ENCODE measurements at regions of chr14 and their contacts with region 1.

Region 1: GRCh38 chr14:61475316-61475715 is 153.9 kb downstream of the PRKCH start:
- DNase-seq: peak in 3 of 5 donors; percentile 38 to 52 (median 40)
- H3K4me3 ChIP-seq: no peak overlapping the region
- H3K4me3 Mint-ChIP-seq: peak overlapping the region in 6 of 8 donors; percentile 25 to 81 (median 48)
- H3K27ac ChIP-seq: peak overlapping the region; percentile 87
- H3K27ac Mint-ChIP-seq: peak overlapping the region; percentile 87 to 100 (median 93)
- H3K4me1 ChIP-seq: peaks cover 98% of the 10 kb centered on the region
- H3K4me1 Mint-ChIP-seq: peaks cover 76 to 97% (median 92%) of the 10 kb centered on the region in 4 donors
- H3K27me3 ChIP-seq: no peaks in the 10 kb centered on the region
- H3K27me3 Mint-ChIP-seq: no peaks in the 10 kb centered on the region

Region 2: DNA sequence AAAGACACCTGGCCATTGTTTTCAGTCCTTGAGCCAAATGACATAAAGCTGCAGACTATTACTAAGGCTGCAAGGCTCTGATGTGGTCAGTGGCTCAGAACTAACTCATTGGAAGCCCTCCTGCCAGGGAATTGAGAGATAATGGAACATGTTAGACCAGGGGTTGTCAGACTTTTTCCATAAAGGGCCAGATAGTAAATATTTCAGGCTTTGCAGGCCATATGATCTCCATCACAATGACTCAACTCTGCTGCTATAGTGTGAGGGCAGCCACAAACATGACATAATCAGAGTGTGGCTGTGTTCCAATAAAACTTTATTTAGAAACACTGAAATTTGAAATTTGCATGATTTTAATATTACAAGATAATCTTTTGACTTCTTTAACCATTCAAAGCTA is 334.4 kb before region 1 on chr14:
- CTCF ChIA-PET with region 1: no interaction called
- POLR2A ChIA-PET with region 1: no interaction called
- intact Hi-C with region 1: no loop called
- DNase-seq: no peak
- H3K4me3 ChIP-seq: no peak overlapping the region
- H3K4me3 Mint-ChIP-seq: no peak overlapping the region
- H3K27ac ChIP-seq: no peak overlapping the region
- H3K27ac Mint-ChIP-seq: no peak overlapping the region
- H3K4me1 ChIP-seq: no peaks in the 10 kb centered on the region
- H3K4me1 Mint-ChIP-seq: no peaks in the 10 kb centered on the region
- H3K27me3 ChIP-seq: no peaks in the 10 kb centered on the region
- H3K27me3 Mint-ChIP-seq: peaks cover 11 to 18% of the 10 kb centered on the region in 2 donors

Region 3: GRCh38 chr14:61321385-61322010 is 153.8 kb before region 1 on chr14 and contains the start of gene PRKCH:
- CTCF ChIA-PET with region 1: no interaction called
- POLR2A ChIA-PET with region 1: interaction called, 11 read pairs
- intact Hi-C with region 1: no loop called
- DNase-seq: peak; percentile 84 to 91 (median 85)
- H3K4me3 ChIP-seq: peak within 1 kb of the TSS; percentile 85 to 95
- H3K4me3 Mint-ChIP-seq: peak within 1 kb of the TSS; percentile 98 to 100 (median 99)
- H3K27ac ChIP-seq: peak within 1 kb of the TSS; percentile 89
- H3K27ac Mint-ChIP-seq: peak within 1 kb of the TSS in 6 of 7 donors; percentile 94 to 99 (median 97)
- H3K4me1 ChIP-seq: peaks cover 26% of the 10 kb centered on the region
- H3K4me1 Mint-ChIP-seq: peaks cover 17 to 40% (median 22%) of the 10 kb centered on the region in 4 donors
- H3K27me3 ChIP-seq: no peaks in the 10 kb centered on the region
- H3K27me3 Mint-ChIP-seq: no peaks in the 10 kb centered on the region
- total RNA-seq, gene PRKCH: 247 to 284 TPM

Region 4: DNA sequence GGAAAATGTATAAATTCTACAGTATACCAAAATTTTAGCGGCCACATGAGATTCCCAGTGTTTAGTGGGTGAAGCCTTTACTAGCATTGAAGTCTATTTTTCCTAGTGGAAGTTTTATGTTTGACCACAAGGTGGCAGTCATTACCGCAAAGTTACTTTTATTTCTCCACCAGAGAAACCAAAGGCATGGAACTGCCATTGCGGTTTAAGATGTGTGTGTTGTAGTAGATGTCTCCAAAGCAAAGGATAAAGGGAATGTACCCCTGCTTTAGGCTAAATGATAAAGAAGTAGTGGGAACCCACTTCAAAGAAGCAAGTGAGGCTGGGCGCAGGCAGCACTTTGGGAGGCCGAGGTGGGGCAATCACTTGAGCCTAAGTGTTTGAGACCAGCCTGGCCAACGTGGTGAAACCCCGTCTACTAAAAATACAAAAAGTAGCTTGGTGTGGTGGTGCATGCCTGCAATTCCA is 13.5 kb before region 1 on chr14:
- CTCF ChIA-PET with region 1: interaction called, 37 read pairs
- POLR2A ChIA-PET with region 1: interaction called, 16 read pairs
- intact Hi-C with region 1: loop called (anchors 1 kb)
- DNase-seq: peak; percentile 58 to 71 (median 69)
- H3K4me3 ChIP-seq: no peak overlapping the region
- H3K4me3 Mint-ChIP-seq: peak overlapping the region in 5 of 8 donors; percentile 21 to 51 (median 47)
- H3K27ac ChIP-seq: peak overlapping the region; percentile 22
- H3K27ac Mint-ChIP-seq: peak overlapping the region; percentile 88 to 97 (median 92)
- H3K4me1 ChIP-seq: peaks cover 46% of the 10 kb centered on the region
- H3K4me1 Mint-ChIP-seq: peaks cover 47 to 77% (median 60%) of the 10 kb centered on the region in 4 donors
- H3K27me3 ChIP-seq: no peaks in the 10 kb centered on the region
- H3K27me3 Mint-ChIP-seq: no peaks in the 10 kb centered on the region

Region 5: GRCh38 chr14:61525293-61526011 is 50.1 kb after region 1 on chr14:
- CTCF ChIA-PET with region 1: interaction called, 9 read pairs
- POLR2A ChIA-PET with region 1: interaction called, 14 read pairs
- intact Hi-C with region 1: no loop called
- DNase-seq: peak in 3 of 5 donors; percentile 34 to 79 (median 34)
- H3K4me3 ChIP-seq: no peak overlapping the region
- H3K4me3 Mint-ChIP-seq: peak overlapping the region in 7 of 8 donors; percentile 17 to 64 (median 41)
- H3K27ac ChIP-seq: peak overlapping the region; percentile 37
- H3K27ac Mint-ChIP-seq: peak overlapping the region; percentile 88 to 95 (median 91)
- H3K4me1 ChIP-seq: peaks cover 55% of the 10 kb centered on the region
- H3K4me1 Mint-ChIP-seq: peaks cover 59 to 87% (median 72%) of the 10 kb centered on the region in 4 donors
- H3K27me3 ChIP-seq: no peaks in the 10 kb centered on the region
- H3K27me3 Mint-ChIP-seq: no peaks in the 10 kb centered on the region

Region 6: GRCh38 chr14:61719344-61720293 is 244.3 kb after region 1 on chr14:
- CTCF ChIA-PET with region 1: interaction called, 16 read pairs
- POLR2A ChIA-PET with region 1: interaction called, 11 read pairs
- intact Hi-C with region 1: loop called (anchors 5 kb)
- DNase-seq: peak in 3 of 5 donors; percentile 26 to 33 (median 26)
- H3K4me3 ChIP-seq: peak overlapping the region in 1 of 2 donors; percentile 3
- H3K4me3 Mint-ChIP-seq: peak overlapping the region in 6 of 8 donors; percentile 14 to 74 (median 50)
- H3K27ac ChIP-seq: peak overlapping the region; percentile 7
- H3K27ac Mint-ChIP-seq: peak overlapping the region; percentile 32 to 87 (median 77)
- H3K4me1 ChIP-seq: peaks cover 59% of the 10 kb centered on the region
- H3K4me1 Mint-ChIP-seq: peaks cover 41 to 72% (median 60%) of the 10 kb centered on the region in 4 donors
- H3K27me3 ChIP-seq: no peaks in the 10 kb centered on the region
- H3K27me3 Mint-ChIP-seq: no peaks in the 10 kb centered on the region

Region 7: DNA sequence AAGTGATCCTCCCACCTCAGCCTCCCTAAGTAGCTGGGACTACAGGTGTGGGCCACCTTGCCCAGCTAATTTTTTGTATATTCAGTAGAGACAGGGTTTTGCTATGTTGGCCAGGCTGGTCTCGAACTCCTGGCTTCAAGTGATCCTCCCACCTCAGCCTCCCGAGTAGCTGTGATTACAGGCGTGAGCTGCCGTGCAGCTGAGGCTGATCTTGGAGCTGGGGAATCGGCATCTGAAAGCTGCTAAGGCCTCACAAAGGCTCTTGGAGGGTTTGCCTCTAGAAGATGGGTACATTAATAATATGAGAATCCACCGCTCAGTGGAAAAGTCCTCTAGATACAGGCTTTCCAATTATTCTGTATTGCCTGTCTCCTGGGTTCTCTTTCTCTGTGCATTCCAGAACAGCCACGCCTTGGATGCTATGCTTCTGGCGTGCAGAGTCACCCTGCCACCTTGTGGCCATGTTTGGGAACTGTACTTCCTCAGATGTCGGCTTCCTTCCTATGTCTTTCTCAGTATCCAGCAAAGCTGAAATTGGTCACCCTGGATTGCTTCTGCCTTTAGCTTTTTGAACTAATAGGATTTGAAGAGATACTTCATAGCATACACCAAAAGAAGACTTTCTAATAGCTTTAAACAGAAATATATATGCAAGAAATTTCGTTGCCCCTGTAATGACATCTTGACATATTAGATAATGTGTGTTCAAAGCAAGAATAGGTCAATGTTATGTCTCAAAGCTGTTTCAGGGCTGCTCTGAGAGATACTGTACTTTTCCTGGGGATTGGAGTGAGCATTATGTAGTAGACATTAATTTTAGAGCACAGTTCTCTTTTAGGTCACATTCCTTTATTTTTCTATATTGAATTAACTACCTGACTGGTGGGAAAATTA is 362.3 kb after region 1 on chr14:
- CTCF ChIA-PET with region 1: interaction called, 18 read pairs
- POLR2A ChIA-PET with region 1: interaction called, 3 read pairs
- intact Hi-C with region 1: loop called (anchors 5 kb)
- DNase-seq: peak; percentile 64 to 72 (median 67)
- H3K4me3 ChIP-seq: no peak overlapping the region
- H3K4me3 Mint-ChIP-seq: no peak overlapping the region
- H3K27ac ChIP-seq: no peak overlapping the region
- H3K27ac Mint-ChIP-seq: no peak overlapping the region
- H3K4me1 ChIP-seq: no peaks in the 10 kb centered on the region
- H3K4me1 Mint-ChIP-seq: no peaks in the 10 kb centered on the region
- H3K27me3 ChIP-seq: no peaks in the 10 kb centered on the region
- H3K27me3 Mint-ChIP-seq: peaks cover 1 to 7% of the 10 kb centered on the region in 2 donors

Region 8: DNA sequence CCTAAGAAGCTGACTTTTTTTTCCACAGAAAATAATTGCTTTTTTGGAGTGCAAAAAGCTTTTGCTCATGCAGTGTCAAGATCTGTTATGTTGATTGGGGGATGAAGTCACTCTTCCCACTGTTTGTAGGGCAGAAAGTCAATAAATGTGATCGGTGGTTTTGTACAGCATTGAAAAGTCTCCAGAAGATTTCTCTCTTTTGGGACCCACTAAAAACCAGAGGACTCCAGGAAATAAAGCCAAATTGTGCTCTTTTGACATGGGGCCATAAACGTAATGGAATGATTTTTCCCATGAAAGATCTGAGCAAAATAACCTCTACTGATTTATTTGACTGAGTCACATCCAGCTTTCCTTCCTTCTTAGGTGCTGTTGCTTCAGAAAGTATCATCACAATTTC is 409.4 kb after region 1 on chr14:
- CTCF ChIA-PET with region 1: no interaction called
- POLR2A ChIA-PET with region 1: no interaction called
- intact Hi-C with region 1: no loop called
- DNase-seq: no peak
- H3K4me3 ChIP-seq: no peak overlapping the region
- H3K4me3 Mint-ChIP-seq: no peak overlapping the region
- H3K27ac ChIP-seq: no peak overlapping the region
- H3K27ac Mint-ChIP-seq: no peak overlapping the region
- H3K4me1 ChIP-seq: peaks cover 3% of the 10 kb centered on the region
- H3K4me1 Mint-ChIP-seq: peaks cover 3 to 8% (median 7%) of the 10 kb centered on the region in 4 donors
- H3K27me3 ChIP-seq: no peaks in the 10 kb centered on the region
- H3K27me3 Mint-ChIP-seq: peaks cover 10 to 21% of the 10 kb centered on the region in 2 donors

Region 9: DNA sequence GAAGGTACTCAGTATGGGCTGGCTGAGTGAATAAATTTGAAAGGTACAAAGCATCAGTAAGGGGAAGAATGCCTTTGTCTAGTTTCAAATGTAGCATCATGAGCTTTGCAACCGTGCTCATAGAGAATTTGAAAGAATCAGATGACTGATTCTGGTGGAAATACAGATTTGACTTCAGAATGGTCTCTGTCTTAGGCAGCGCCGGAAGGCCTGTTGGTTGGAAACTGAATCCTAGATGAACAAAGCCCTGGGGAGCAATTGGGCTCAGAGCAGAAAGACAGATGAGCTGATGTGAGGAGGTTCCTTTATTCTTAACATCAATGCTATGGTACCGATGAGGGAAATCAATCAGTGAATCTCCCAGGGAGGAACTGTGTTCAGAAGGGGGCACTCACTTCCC is 424.2 kb after region 1 on chr14:
- CTCF ChIA-PET with region 1: no interaction called
- POLR2A ChIA-PET with region 1: no interaction called
- intact Hi-C with region 1: no loop called
- DNase-seq: no peak
- H3K4me3 ChIP-seq: no peak overlapping the region
- H3K4me3 Mint-ChIP-seq: no peak overlapping the region
- H3K27ac ChIP-seq: no peak overlapping the region
- H3K27ac Mint-ChIP-seq: no peak overlapping the region
- H3K4me1 ChIP-seq: no peaks in the 10 kb centered on the region
- H3K4me1 Mint-ChIP-seq: no peaks in the 10 kb centered on the region
- H3K27me3 ChIP-seq: no peaks in the 10 kb centered on the region
- H3K27me3 Mint-ChIP-seq: peaks cover 0 to 2% of the 10 kb centered on the region in 2 donors

Region 10: DNA sequence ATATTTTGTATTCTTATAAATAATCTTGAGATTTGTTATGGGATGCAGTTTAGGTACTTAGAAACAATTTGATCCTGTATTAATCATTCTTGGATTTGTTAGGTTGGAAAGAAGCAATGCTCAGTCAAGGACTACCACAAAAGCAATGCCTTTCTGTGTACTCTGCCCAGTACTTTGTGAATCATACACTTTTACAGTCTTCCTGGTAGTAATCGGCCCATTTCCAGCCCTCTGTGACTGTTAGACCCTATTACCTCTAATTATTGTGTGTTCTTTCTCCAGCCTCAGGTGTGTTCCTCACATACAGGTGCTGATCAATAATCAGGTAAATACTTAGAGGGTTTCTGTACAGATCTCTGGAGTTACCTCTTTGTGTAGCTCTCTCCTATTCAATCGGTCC is 960.9 kb after region 1 on chr14:
- CTCF ChIA-PET with region 1: no interaction called
- POLR2A ChIA-PET with region 1: no interaction called
- intact Hi-C with region 1: no loop called
- DNase-seq: no peak
- H3K4me3 ChIP-seq: no peak overlapping the region
- H3K4me3 Mint-ChIP-seq: no peak overlapping the region
- H3K27ac ChIP-seq: no peak overlapping the region
- H3K27ac Mint-ChIP-seq: no peak overlapping the region
- H3K4me1 ChIP-seq: no peaks in the 10 kb centered on the region
- H3K4me1 Mint-ChIP-seq: no peaks in the 10 kb centered on the region
- H3K27me3 ChIP-seq: no peaks in the 10 kb centered on the region
- H3K27me3 Mint-ChIP-seq: no peaks in the 10 kb centered on the region

Measured in CD4-positive, alpha-beta memory T cell (primary cell).